ENCODE measurements at regions of chr12 and their contacts with region 1.

Region 1: GRCh38 chr12:120265473-120266179 is at the start of gene PXN:
- DNase-seq: peak; percentile 90
- ATAC-seq: peak; percentile 87 to 92
- total RNA-seq, gene PXN: 70.3 to 86.1 TPM

Region 2: GRCh38 chr12:120216742-120217605 is 48.7 kb before region 1 on chr12:
- intact Hi-C with region 1: no loop called
- DNase-seq: no peak
- ATAC-seq: no peak

Region 3: DNA sequence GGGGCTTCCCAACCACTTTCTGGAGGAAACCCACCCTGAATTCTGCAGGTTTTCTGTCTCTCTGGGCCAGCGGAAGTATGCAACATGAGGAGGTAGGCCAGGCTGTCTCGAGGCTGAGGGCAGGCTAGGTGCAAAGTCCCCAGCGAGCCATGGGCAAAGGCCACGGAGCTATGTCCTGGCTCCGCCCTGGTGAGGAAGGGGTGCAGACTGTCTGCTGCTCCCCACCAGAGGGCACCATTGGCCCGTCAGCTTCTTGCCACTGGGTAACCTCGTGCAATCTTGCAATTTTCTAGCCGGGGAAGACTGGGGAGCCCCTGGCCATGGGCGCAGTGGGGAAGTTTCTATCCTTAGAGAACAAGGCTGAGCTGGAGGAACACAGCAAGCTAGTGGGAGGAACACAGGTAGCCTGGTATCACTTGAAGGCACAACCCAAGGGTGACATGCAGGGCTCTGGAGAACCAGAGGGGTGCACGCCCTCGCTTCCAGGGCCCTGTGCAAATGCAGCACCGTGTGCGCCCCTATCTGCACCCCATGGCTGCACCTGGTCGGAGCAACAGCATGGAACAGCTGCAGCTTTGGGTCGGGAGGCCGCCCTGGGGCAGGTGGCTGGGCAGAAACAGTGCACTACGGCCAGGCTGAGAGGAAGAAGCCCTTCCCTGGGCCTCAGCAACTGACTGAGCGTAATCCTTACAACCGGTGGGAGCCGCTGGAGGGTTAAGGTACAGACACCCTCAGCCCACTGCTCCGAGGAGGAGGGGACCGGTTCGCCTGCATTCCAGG is 37.1 kb before region 1 on chr12:
- intact Hi-C with region 1: loop called (anchors 1 kb)
- DNase-seq: peak; percentile 89
- ATAC-seq: peak; percentile 63 to 77

Region 4: GRCh38 chr12:120445911-120446843 is 180.6 kb after region 1 on chr12 and contains the starts of genes GATC and TRIAP1:
- intact Hi-C with region 1: no loop called
- DNase-seq: peak; percentile 83
- ATAC-seq: peak; percentile 98 to 99
- total RNA-seq, gene GATC: 14.8 to 19.1 TPM
- total RNA-seq, gene TRIAP1: 13.6 to 15.3 TPM

Region 5: DNA sequence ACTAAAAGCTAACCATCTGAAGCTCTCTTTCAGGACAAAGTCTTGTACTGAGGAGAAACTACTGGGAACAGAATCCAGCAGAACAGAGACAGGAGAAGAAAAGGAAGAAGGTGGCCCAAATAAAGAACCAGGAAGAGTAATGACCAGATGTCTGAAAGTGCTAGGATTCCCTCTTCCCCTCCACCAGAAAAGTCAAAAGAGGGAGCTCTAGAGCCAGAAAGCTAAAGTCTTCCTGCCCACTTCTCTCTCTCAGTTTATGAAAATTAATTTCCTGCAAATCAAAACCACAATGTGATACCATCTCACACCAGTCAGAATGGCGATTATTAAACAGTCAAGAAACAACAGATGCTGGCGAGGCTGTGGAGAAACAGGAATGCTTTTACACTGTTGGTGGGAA is 591.4 kb after region 1 on chr12:
- intact Hi-C with region 1: no loop called
- DNase-seq: no peak
- ATAC-seq: no peak

Measured in left cardiac atrium (tissue), 4 donors.